ENCODE measurements at regions of chr11 and their contacts with region 1.

Region 1: GRCh38 chr11:33039274-33040032 is at the start of gene TCP11L1:
- DNase-seq: peak; percentile 86
- ATAC-seq: peak; percentile 75
- H3K4me3 Mint-ChIP-seq: peak within 1 kb of the TSS; percentile 87
- H3K27ac Mint-ChIP-seq: peak within 1 kb of the TSS; percentile 97
- H3K4me1 Mint-ChIP-seq: peaks cover 25% of the 10 kb centered on the region
- H3K27me3 Mint-ChIP-seq: peaks cover 1% of the 10 kb centered on the region
- CTCF ChIP-seq: no peak
- total RNA-seq, gene TCP11L1: 11.0 to 12.7 TPM

Region 2: DNA sequence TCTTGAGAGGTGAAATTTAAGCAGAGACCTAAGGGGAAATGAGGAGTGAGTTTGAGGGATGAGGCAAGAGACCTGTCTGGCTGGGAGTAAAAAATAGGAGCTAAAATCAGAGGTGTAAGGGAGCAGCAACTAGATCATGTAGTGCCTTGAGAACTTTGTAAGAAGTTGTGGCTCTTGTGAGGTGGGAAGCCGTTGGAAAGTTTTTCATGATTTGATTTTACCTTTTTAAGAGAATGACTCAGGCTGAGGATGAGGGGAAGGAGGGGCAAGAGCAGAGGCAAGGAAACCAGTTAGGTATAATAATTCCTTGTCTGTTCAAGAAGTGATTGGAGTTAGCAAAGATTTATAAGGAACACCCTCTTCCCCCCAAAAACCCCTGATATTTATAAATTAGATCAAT is 121.0 kb before region 1 on chr11:
- CTCF ChIA-PET with region 1: no interaction called
- POLR2A ChIA-PET with region 1: no interaction called
- intact Hi-C with region 1: no loop called
- DNase-seq: no peak
- ATAC-seq: no peak
- H3K4me3 Mint-ChIP-seq: no peak overlapping the region
- H3K27ac Mint-ChIP-seq: no peak overlapping the region
- H3K4me1 Mint-ChIP-seq: peaks cover 30% of the 10 kb centered on the region
- H3K27me3 Mint-ChIP-seq: no peaks in the 10 kb centered on the region
- CTCF ChIP-seq: no peak

Region 3: DNA sequence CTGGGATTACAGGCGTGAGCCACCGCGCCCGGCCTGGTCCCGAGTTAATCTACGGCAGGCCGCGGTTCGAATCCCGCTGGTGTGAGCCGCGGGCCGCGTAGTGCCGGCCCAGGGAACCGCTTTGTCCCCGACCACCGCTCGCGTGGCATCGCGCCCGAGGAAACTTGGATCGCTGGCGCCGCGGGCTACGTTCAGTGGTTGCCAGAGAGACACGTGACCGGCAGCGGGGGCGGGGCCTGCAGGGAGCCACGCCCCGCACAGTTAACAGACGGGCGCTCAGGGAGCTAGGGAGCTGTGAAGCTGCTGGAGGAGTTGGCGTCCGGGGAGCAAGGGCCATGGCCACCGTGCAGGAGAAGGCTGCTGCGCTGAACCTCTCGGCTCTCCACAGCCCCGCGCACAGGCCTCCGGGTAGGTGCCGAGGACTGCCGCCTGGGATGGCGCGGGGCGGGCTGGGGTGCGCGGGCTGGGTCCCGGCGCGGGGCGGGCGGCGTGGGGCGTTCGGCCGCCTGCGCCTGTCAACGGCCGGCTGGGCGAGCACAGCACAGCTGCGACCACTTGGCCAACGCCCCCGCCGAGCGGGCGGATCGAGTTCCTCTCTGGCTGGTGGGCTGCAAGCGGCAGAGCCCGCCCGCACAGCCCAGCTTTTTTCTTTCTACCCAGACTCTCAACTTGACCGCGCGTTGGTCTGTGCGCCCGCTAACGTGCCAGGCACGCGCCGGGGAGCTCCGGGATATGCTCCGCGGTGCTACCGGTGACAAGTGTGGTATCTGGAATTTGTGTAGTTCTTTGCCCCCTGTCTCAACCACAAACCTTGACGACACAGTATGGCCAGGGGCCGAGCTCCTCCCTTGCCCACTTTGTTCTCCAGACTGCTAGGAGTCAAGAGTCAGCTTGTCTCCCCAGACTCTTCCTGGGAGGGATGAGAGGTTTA is 23.6 kb before region 1 on chr11 and contains the start of gene DEPDC7:
- CTCF ChIA-PET with region 1: interaction called, 5 read pairs
- POLR2A ChIA-PET with region 1: interaction called, 14 read pairs
- intact Hi-C with region 1: loop called (anchors 1 kb)
- DNase-seq: peak; percentile 92
- ATAC-seq: peak; percentile 76
- H3K4me3 Mint-ChIP-seq: peak within 1 kb of the TSS; percentile 78
- H3K27ac Mint-ChIP-seq: peak within 1 kb of the TSS; percentile 52
- H3K4me1 Mint-ChIP-seq: peaks cover 41% of the 10 kb centered on the region
- H3K27me3 Mint-ChIP-seq: peaks cover 16% of the 10 kb centered on the region
- CTCF ChIP-seq: no peak
- total RNA-seq, gene DEPDC7: 2.8 to 3.0 TPM

Region 4: DNA sequence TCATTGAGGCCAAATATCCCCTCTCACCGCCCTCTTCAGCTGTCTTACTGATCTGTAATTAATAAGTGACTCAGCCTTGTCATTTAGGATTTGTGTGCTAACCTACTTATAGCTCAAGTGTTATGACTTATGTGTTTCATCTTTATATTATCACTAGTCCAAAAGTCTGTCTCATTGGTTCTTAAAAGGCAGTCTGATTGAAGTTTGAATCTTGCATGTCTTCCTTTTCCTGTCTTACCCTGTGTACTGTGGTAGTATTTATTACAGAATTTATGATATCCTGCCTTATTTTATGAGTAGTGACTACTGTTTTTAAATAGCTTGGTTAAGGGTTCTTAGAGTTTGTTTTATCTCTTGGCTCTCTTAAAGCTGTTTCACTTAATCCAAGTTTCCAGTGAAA is 17.5 kb before region 1 on chr11:
- CTCF ChIA-PET with region 1: no interaction called
- POLR2A ChIA-PET with region 1: interaction called, 13 read pairs
- intact Hi-C with region 1: no loop called
- DNase-seq: no peak
- ATAC-seq: peak; percentile 82
- H3K4me3 Mint-ChIP-seq: no peak overlapping the region
- H3K27ac Mint-ChIP-seq: no peak overlapping the region
- H3K4me1 Mint-ChIP-seq: peaks cover 25% of the 10 kb centered on the region
- H3K27me3 Mint-ChIP-seq: peaks cover 10% of the 10 kb centered on the region
- CTCF ChIP-seq: no peak

Measured in activated CD8-positive, alpha-beta T cell treated with anti-CD3 and anti-CD28 coated beads for 36 hours (primary cell).